Lower leg skin (tissue), 4 donors: ENCODE measurements at regions of chr7 and their contacts with region 1.

Region 1: DNA sequence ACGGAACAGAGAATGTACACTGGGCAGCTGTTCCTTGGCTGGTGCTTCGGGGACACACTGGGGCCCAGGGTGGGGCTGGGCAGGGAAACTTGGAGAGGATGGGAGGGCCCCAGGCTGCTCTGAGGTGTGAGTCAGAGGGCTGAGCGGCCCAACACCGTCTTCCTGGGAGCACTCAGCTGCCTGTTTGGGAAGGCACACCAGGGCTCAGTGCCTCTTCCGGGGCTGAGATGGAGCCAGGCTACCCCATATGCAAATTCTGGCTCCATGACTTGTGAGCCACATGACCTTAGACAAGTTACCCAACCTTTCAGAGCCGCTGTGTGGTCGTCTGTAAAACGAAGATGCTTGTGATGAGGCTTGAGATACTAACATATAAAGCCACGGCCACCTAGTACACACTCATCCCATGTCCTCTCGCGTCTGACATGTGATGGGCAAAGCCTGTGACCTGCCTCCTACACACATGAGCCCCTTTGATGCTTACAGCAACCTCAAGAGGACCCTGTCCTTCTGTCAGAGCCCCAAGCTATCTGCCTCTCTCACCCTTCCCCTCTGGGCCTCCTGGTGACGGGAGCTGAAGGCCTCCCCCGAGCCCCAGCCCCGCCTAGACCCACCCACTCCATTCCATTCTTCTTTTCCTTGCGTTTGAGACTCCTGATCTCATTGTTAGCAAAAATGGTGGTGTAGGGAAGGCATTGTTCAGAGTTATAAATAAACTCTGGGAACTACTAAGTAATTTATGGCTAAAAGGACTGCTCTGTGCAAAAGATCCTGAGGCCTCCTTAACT is 26.1 kb downstream of the KLRG2 start:
- DNase-seq: no peak
- H3K4me3 ChIP-seq: no peak overlapping the region
- CTCF ChIP-seq: no peak
- POLR2A ChIP-seq: no peak

Region 2: GRCh38 chr7:139471740-139472353 is 14.5 kb after region 1 on chr7:
- intact Hi-C with region 1: loop called (anchors 1 kb)
- DNase-seq: no peak
- H3K4me3 ChIP-seq: no peak overlapping the region
- CTCF ChIP-seq: no peak
- POLR2A ChIP-seq: no peak